ENCODE measurements at regions of chr2 and their contacts with region 1.

Region 1: DNA sequence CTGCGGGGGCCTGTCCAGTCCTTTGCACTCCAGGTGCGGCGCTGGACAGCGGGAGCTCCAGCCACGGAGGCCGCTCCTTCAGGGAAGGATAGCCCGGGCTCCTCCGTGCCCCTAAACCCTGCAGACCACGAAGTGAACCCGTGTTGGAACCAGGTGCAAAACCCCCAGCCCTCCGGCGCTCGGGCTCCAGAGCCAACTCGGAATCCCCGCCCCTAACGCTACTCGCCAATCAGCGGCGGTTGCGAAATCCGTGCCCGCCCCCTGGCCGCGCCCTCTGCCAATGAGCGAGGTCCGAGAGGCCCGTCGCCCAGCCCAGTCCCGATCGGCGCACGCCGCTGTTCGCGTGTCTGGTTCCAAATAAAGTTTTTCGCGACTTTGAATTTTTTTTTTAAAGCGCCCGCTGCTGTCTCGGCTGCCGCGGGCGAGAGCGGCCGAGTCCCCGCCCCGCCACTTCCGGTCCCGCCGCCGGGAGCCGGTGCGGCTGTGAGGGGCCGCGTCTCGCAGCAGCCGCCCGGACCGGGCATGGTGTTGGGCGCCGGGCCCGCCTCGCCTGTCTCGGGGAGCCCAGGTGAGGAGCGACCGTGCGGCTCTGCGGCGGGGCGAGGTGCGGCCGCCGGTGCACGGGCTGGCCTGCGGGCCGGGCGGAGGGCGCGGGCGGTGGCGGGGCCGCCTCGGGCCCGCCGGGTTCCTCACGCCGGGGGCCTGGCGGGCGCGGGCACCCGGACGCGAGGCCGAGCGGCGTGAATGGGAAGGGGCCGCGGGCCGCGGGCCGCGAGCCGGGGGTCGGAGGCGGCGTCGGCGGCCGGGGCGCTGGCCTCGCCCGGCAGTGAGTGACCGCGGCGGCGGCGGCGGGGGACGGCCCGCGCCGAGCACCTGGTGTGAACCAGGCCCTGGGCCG is at the start of gene UBE2F:
- DNase-seq: peak; percentile 96
- H3K4me3 Mint-ChIP-seq: peak within 1 kb of the TSS; percentile 81
- H3K27ac Mint-ChIP-seq: peak within 1 kb of the TSS; percentile 65
- H3K4me1 Mint-ChIP-seq: peaks cover 40% of the 10 kb centered on the region
- H3K27me3 Mint-ChIP-seq: no peaks in the 10 kb centered on the region
- total RNA-seq, gene UBE2F: 43.4 to 45.5 TPM

Region 2: DNA sequence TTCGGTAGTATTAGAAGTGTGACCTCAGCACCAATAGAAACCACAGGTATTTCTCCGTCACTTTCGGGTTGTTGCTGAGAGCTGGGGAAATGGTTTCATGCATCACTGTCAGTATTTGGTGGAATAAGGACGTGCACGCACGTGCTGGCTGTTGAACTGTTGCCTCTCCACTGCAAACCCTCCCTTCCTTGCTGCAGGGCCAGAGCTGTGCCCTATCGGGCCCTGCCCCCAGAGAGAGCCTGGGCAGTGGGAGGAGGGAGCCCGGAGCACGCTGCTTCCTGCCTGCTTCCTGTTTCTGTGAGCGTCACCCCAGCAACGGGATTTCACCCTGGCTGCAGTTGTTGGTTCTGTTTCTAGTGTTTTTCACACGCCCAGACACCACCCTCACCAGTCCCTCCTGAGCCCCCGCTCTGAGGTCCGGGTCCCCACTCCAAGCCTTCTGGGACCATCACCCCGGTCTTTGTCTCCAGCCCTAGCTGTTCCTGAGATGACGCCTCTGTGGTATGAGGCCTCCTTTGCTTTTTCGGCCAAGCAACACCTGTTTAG is 292.0 kb before region 1 on chr2:
- CTCF ChIA-PET with region 1: interaction called, 3 read pairs
- intact Hi-C with region 1: loop called (anchors 5 kb)
- DNase-seq: peak; percentile 85
- H3K4me3 Mint-ChIP-seq: peak overlapping the region; percentile 77
- H3K27ac Mint-ChIP-seq: peak overlapping the region; percentile 80
- H3K4me1 Mint-ChIP-seq: peaks cover 45% of the 10 kb centered on the region
- H3K27me3 Mint-ChIP-seq: no peaks in the 10 kb centered on the region

Region 3: DNA sequence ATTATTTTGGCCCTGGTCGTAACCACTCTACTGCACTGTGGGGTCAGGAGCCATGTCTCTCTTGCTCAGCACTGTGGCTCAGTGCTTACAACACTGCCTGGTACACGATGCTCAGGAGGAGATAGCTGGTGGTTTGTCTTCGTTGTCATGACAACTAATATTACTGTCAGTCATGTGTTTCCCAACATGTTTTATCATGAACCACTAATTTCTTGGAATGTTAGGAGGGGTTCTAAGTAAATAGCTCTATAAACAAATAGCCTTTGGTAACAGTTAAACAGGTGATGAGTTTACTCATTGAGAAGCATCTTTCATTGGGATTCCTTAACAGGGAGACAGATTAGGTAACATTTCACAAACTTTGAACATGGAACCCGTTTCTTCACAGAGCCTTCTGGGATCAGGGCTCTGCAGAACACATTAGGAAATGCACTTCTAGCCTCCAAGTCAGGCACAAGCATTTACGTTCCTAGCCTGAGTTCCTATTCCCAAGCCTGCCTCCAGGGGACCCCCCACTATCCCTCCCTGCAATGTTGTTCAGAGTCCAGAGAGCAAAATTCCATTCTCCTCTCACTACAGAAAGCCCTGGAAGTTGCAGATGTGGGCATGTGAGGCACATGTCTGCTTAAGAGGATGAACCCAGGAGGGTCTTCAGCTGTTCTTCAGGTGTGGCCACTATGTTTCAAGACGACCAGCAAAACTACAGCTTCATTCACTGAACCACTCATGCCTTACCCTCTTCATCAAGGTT is 174.7 kb before region 1 on chr2:
- CTCF ChIA-PET with region 1: no interaction called
- intact Hi-C with region 1: no loop called
- DNase-seq: no peak
- H3K4me3 Mint-ChIP-seq: no peak overlapping the region
- H3K27ac Mint-ChIP-seq: no peak overlapping the region
- H3K4me1 Mint-ChIP-seq: no peaks in the 10 kb centered on the region
- H3K27me3 Mint-ChIP-seq: no peaks in the 10 kb centered on the region

Region 4: DNA sequence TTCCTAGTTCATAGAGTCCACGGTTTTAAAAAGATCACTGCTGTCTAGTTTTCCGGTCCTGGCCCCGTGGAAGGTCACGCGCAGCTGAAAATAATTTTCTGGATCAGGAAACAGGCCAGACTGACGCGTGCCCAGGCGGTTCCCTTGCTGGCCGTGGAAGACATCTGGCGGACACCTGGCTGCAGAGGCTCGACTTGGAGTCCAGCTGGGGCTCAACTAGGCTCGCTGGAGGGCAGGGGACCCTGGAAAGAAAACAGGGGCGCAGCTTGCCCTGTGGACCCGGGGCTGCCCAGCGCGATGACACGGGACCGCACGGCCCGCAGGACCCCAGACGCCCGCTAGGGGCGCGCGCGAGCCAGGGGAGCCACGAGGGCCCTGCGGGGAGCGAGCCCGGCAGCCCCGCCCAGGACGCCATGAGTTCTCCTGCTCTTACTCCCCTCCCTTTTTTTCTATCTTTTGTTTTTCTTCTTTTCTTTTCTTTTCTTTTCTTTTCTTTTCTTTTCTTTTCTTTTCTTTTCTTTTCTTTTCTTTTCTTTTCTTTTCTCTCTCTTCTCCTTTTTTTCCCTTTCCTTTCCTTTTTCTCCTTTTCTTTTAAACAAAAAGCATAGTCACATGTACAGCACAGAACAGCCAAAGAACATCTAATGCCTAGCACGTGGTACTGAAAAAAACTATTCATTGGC is 43.2 kb before region 1 on chr2:
- CTCF ChIA-PET with region 1: interaction called, 3 read pairs
- intact Hi-C with region 1: loop called (anchors 2 kb)
- DNase-seq: peak; percentile 80
- H3K4me3 Mint-ChIP-seq: peak overlapping the region; percentile 52
- H3K27ac Mint-ChIP-seq: no peak overlapping the region
- H3K4me1 Mint-ChIP-seq: peaks cover 21% of the 10 kb centered on the region
- H3K27me3 Mint-ChIP-seq: no peaks in the 10 kb centered on the region

Region 5: GRCh38 chr2:238015705-238016104 is 48.9 kb after region 1 on chr2:
- CTCF ChIA-PET with region 1: interaction called, 3 read pairs
- intact Hi-C with region 1: loop called (anchors 1 kb)
- DNase-seq: no peak
- H3K4me3 Mint-ChIP-seq: no peak overlapping the region
- H3K27ac Mint-ChIP-seq: no peak overlapping the region
- H3K4me1 Mint-ChIP-seq: peaks cover 2% of the 10 kb centered on the region
- H3K27me3 Mint-ChIP-seq: no peaks in the 10 kb centered on the region

Region 6: DNA sequence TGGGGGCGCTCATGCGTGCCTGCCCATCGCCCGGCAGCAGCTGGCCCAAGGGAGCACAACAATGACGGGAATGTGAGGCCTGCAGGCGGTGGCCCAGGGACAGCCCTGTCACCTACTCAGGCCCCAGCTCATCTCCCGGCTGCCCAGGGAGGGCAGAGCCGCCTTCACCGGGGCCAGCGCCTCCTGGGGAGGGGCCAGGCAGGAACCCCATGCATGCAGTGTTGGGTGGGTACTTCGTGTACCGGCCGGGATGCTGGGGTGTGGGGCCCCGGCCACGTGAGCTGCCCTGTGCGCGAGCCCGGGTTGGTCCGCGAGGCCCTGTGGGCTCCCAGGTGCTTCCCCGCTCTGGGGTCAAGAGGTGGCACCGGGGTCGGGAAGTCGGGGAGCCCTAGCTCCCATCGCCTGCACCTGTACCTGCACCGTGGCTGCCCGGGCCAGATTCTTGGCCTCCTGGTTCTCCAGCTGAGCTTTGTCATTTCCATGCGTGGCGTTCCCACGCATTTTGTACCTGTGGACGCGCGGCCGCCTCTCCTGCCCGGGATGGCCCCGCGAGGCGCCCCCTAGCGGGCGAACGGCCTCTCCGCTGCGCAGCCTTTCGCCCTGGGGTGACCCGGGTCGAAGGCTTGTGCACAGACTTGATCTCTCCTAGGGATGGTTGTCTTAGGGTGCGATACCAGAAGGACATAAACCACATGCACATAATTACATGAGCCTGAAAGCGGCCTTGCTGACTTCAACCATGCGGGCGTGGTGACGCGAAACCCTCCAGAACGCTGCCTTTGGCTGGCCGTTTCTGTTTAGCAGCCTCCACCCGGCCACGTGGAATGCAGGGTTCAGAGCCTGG is 172.6 kb after region 1 on chr2:
- CTCF ChIA-PET with region 1: interaction called, 7 read pairs
- intact Hi-C with region 1: loop called (anchors 1 kb)
- DNase-seq: peak; percentile 22
- H3K4me3 Mint-ChIP-seq: no peak overlapping the region
- H3K27ac Mint-ChIP-seq: no peak overlapping the region
- H3K4me1 Mint-ChIP-seq: peaks cover 6% of the 10 kb centered on the region
- H3K27me3 Mint-ChIP-seq: no peaks in the 10 kb centered on the region

Region 7: GRCh38 chr2:238239872-238240751 is 273.3 kb after region 1 on chr2 and contains the start of gene HES6:
- CTCF ChIA-PET with region 1: interaction called, 3 read pairs
- intact Hi-C with region 1: loop called (anchors 2 kb)
- DNase-seq: peak; percentile 78
- H3K4me3 Mint-ChIP-seq: peak within 1 kb of the TSS; percentile 82
- H3K27ac Mint-ChIP-seq: no peak within 1 kb of the TSS
- H3K4me1 Mint-ChIP-seq: peaks cover 4% of the 10 kb centered on the region
- H3K27me3 Mint-ChIP-seq: peaks cover 24% of the 10 kb centered on the region
- total RNA-seq, gene HES6: 3.1 to 4.0 TPM

Measured in activated naive CD4-positive, alpha-beta T cell treated with anti-CD3 and anti-CD28 coated beads for 36 hours (primary cell).